Tibial artery (tissue), 4 donors: ENCODE measurements at regions of chr11 and their contacts with region 1.

Region 1: GRCh38 chr11:48087974-48088681 is 107.8 kb downstream of the PTPRJ start:
- DNase-seq: peak in 1 of 2 donors; percentile 44
- H3K4me3 ChIP-seq: no peak overlapping the region
- H3K27ac ChIP-seq: no peak overlapping the region
- H3K4me1 ChIP-seq: peaks cover 0 to 11% (median 9%) of the 10 kb centered on the region in 4 donors
- H3K27me3 ChIP-seq: no peaks in the 10 kb centered on the region
- CTCF ChIP-seq: no peak

Region 2: GRCh38 chr11:47495011-47495855 is 592.9 kb before region 1 on chr11:
- intact Hi-C with region 1: no loop called
- DNase-seq: no peak
- H3K4me3 ChIP-seq: no peak overlapping the region
- H3K27ac ChIP-seq: peak overlapping the region in 1 of 2 donors; percentile 6
- H3K4me1 ChIP-seq: peaks cover 0 to 61% (median 44%) of the 10 kb centered on the region in 4 donors
- H3K27me3 ChIP-seq: no peaks in the 10 kb centered on the region
- CTCF ChIP-seq: no peak

Region 3: DNA sequence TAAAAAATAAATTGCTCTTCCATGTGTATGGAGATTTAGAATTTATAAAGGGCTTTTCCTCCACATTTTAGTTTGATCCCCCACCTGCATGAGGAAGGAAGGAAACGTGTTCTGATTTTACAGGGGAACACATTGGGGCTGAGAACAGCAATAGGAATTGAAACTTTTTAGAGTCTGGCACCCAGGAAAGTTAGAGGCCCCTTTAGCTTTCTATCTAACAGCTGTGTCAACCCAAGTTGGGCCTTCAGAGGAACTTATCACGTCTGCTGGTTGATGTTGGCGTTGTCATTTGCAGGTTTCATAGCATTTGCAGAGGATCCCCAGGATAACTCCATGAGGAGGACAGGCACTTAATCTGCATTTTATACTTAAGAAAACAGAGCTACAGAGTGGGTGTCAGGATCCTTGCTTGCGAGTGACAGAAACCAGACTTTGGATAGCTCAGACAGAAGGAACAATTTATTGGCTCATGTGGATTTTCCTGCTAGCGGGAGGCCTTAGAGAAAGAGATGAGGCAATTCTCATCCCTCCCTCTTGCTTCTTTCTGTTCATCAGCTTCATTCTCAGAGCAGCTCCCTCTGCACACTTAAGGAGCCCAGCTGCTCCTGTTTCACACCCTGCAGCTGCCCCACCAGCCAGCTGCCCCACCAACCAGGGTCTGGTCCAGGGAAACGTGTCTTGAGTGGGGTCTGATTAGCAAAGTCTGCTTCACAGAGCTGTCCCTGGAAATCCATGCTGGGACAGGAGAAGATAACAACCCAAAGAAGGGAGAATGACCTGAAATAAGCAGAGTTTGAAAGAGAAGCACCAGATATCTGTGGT is 36.0 kb after region 1 on chr11:
- intact Hi-C with region 1: loop called (anchors 2 kb)
- DNase-seq: no peak
- H3K4me3 ChIP-seq: no peak overlapping the region
- H3K27ac ChIP-seq: no peak overlapping the region
- H3K4me1 ChIP-seq: no peaks in the 10 kb centered on the region
- H3K27me3 ChIP-seq: no peaks in the 10 kb centered on the region
- CTCF ChIP-seq: no peak